ENCODE measurements at regions of chr20 and their contacts with region 1.

Region 1: GRCh38 chr20:44651684-44652423 is at the start of gene ADA:
- DNase-seq: peak; percentile 46
- H3K4me3 Mint-ChIP-seq: peak within 1 kb of the TSS; percentile 87
- H3K27ac Mint-ChIP-seq: peak within 1 kb of the TSS; percentile 76
- H3K4me1 Mint-ChIP-seq: peaks cover 46% of the 10 kb centered on the region
- H3K27me3 Mint-ChIP-seq: no peaks in the 10 kb centered on the region
- total RNA-seq, gene ADA: 54.6 to 54.9 TPM

Region 2: DNA sequence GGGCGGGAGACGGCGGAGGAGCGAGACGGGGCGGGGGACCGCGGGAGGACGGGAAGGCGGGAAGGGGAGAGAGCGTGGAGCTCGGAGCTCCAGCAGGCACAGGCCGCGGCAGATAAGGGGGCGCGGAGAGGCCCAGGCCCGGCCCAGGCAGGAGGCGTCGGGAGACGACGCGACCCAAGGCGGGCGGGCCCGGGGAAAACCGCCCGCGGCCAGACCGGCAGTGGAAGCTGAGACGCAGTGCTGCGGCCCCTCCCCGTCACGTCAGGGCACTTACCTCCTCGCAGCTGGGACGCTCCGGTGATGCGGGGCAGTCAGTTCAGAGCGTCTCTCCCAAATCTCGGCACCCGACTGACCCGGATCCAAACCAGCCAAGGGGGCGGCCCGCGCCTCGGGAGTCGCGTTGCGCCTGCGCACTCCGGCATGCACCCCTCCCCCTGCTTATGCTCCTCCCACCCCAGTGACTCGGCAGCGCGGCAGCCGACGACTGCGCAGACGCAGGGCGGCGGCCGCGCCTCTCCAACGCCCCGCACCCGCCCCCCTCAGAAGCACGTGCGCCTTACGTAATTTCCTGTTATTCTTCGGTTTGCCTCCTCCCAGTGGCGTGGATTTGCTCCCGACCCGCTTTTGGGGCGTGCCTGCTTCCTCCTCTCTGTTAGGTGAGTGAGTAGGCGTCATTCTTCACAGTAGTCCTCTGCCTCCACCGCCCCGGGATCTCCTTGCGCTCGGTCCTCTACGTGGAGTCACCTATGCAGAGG is 441.3 kb before region 1 on chr20 and contains the start of gene OSER1:
- CTCF ChIA-PET with region 1: no interaction called
- intact Hi-C with region 1: loop called (anchors 2 kb)
- DNase-seq: peak; percentile 99
- H3K4me3 Mint-ChIP-seq: peak within 1 kb of the TSS; percentile 94
- H3K27ac Mint-ChIP-seq: peak within 1 kb of the TSS; percentile 92
- H3K4me1 Mint-ChIP-seq: peaks cover 61% of the 10 kb centered on the region
- H3K27me3 Mint-ChIP-seq: no peaks in the 10 kb centered on the region
- total RNA-seq, gene OSER1: 27.7 to 28.4 TPM

Region 3: GRCh38 chr20:44666066-44666465 is 14.2 kb after region 1 on chr20:
- CTCF ChIA-PET with region 1: interaction called, 4 read pairs
- intact Hi-C with region 1: loop called (anchors 1 kb)
- DNase-seq: no peak
- H3K4me3 Mint-ChIP-seq: no peak overlapping the region
- H3K27ac Mint-ChIP-seq: no peak overlapping the region
- H3K4me1 Mint-ChIP-seq: peaks cover 17% of the 10 kb centered on the region
- H3K27me3 Mint-ChIP-seq: no peaks in the 10 kb centered on the region

Region 4: GRCh38 chr20:44966030-44966961 is 314.4 kb after region 1 on chr20 and contains the start of gene STK4:
- CTCF ChIA-PET with region 1: no interaction called
- intact Hi-C with region 1: loop called (anchors 2 kb)
- DNase-seq: peak; percentile 96
- H3K4me3 Mint-ChIP-seq: peak within 1 kb of the TSS; percentile 88
- H3K27ac Mint-ChIP-seq: peak within 1 kb of the TSS; percentile 98
- H3K4me1 Mint-ChIP-seq: peaks cover 56% of the 10 kb centered on the region
- H3K27me3 Mint-ChIP-seq: no peaks in the 10 kb centered on the region
- total RNA-seq, gene STK4: 110 to 116 TPM

Measured in activated naive CD4-positive, alpha-beta T cell treated with anti-CD3 and anti-CD28 coated beads for 36 hours (primary cell).